Left colon (tissue), 2 donors: ENCODE measurements at regions of chr18 and their contacts with region 1.

Region 1: DNA sequence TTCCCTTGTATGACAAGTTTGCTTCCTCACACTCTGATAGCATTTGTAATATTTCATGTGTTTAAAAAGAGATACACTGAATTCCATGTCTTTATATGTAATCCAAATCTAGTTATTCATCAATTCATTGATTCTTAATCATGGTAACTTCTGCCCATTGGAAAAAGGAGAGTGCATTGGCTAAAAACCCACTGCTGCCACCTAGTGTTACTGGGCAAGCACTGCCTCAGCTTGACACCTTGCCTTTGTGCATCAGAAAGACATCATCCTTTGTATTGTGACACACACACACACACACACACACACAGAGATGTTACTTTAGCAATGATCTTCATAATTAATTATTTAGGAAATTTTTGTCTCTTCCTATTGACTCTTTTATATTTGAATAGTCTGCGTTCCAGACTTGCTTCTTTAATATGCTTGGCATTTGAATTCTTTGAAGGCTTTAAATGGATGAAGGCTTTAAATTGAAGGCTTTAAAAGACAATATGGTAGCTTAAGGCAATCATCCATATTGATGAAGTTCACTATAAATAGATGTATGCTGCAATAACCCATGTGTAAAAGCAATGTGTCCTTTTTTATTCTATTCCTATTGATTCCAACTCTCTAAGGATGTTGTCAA is 414.2 kb upstream of the CHST9 start:
- DNase-seq: peak in 1 of 2 donors; percentile 31
- ATAC-seq: peak; percentile 59

Region 2: GRCh38 chr18:26813043-26813442 is 786.3 kb before region 1 on chr18:
- intact Hi-C with region 1: loop called in 1 of 2 experiments (anchors 10 kb)
- DNase-seq: peak in 1 of 2 donors; percentile 40
- ATAC-seq: peak; percentile 84

Region 3: GRCh38 chr18:27363872-27364271 is 235.4 kb before region 1 on chr18:
- intact Hi-C with region 1: loop called in 1 of 2 experiments (anchors 5 kb)
- DNase-seq: no peak
- ATAC-seq: no peak

Region 4: DNA sequence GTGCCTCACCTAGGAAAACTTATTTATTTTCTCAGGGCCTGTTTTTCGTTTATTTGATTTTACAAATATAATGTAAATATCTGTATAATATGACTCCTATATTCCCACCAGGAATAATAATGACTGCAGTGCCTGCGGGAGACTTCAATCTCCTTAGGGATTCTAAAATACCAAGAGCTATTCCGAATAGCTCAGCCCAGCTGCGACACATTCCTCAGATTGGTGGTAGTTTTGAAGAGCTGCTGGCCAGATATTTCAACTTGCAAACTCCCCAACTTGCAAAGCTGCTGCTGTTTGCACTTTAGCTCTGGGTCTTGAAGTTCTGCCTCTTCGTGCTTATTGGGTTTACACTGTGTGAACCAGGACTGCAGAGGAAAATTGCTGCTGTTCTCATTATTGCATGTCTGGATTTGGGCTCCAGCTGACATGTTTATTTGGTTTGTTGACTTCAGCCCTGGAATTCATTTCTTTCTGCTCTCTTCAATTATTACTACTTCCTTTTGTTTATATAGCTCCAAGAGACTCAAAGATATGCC is 66.0 kb after region 1 on chr18:
- intact Hi-C with region 1: no loop called
- DNase-seq: no peak
- ATAC-seq: no peak